ENCODE measurements at regions of chr14 and their contacts with region 1.

Region 1: GRCh38 chr14:36070031-36070719 is 106.3 kb downstream of the PTCSC3 start:
- DNase-seq: peak; percentile 57 to 82
- ATAC-seq: peak; percentile 95 to 96
- H3K4me3 ChIP-seq: no peak overlapping the region
- H3K27ac ChIP-seq: no peak overlapping the region
- H3K4me1 ChIP-seq: peaks cover 16% of the 10 kb centered on the region
- CTCF ChIP-seq: peak; percentile 91
- EP300 ChIP-seq: no peak
- POLR2A ChIP-seq: no peak
- RAD21 ChIP-seq: peak; percentile 94 to 96

Region 2: GRCh38 chr14:35826218-35826951 is 243.8 kb before region 1 on chr14 and contains the start of gene BRMS1L:
- CTCF ChIA-PET with region 1: no interaction called
- POLR2A ChIA-PET with region 1: no interaction called
- DNase-seq: peak; percentile 97 to 99
- ATAC-seq: peak; percentile 96 to 97
- H3K4me3 ChIP-seq: peak within 1 kb of the TSS; percentile 68
- H3K27ac ChIP-seq: peak within 1 kb of the TSS; percentile 90 to 95
- H3K4me1 ChIP-seq: peaks cover 4% of the 10 kb centered on the region; the same call in 1 of the 3 replicates
- CTCF ChIP-seq: no peak
- EP300 ChIP-seq: no peak
- POLR2A ChIP-seq: peak; percentile 95
- RAD21 ChIP-seq: no peak
- polyA plus RNA-seq, gene BRMS1L: 11.0 and 17.0 TPM in 2 replicates

Region 3: DNA sequence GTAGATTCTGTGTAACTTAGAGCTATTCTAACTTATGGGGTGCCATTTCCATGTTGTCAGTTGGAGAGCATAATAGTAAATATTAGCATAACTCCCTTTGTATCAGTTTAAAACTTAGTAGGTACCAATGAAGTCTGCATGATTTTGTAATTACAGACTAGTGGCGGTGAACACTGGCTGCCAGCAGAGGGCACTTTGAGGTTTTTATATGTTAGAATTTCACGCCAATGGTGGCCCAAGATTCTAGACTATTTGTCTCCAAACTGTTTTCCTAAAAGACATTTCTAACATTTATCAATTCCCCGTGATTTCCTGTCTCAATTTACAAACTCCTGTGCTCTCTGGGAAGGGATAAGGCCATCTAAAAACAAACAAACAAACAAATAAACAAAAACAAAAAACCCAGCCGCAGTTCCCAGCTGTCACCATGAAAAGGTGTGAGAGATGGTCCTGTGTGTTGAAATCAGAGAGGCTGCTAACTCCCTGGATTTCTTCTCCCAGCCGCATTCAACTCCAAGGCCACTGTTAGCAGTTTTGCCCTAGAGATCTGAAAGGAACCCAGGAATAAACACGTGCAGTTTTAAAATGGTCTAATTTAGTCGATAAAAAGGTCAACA is 186.4 kb before region 1 on chr14:
- CTCF ChIA-PET with region 1: interaction called, 68 read pairs
- POLR2A ChIA-PET with region 1: no interaction called
- DNase-seq: peak; percentile 10 to 43
- ATAC-seq: peak; percentile 61 to 77; a peak in 3 of 6 replicates
- H3K4me3 ChIP-seq: no peak overlapping the region
- H3K27ac ChIP-seq: no peak overlapping the region
- H3K4me1 ChIP-seq: peaks cover 8% of the 10 kb centered on the region
- CTCF ChIP-seq: peak; percentile 74
- EP300 ChIP-seq: no peak
- POLR2A ChIP-seq: no peak
- RAD21 ChIP-seq: peak; percentile 57 to 62

Region 4: GRCh38 chr14:36085861-36086260 is 15.7 kb after region 1 on chr14:
- CTCF ChIA-PET with region 1: interaction called, 20 read pairs
- POLR2A ChIA-PET with region 1: no interaction called
- DNase-seq: no peak
- ATAC-seq: no peak
- H3K4me3 ChIP-seq: no peak overlapping the region
- H3K27ac ChIP-seq: 0 out of 6 replicates have a peak overlapping the region, but pooled peaks of 1 of the 2 experiments have one; percentile 14
- H3K4me1 ChIP-seq: peaks cover 11% of the 10 kb centered on the region
- CTCF ChIP-seq: no peak
- EP300 ChIP-seq: no peak
- POLR2A ChIP-seq: no peak
- RAD21 ChIP-seq: no peak

Region 5: DNA sequence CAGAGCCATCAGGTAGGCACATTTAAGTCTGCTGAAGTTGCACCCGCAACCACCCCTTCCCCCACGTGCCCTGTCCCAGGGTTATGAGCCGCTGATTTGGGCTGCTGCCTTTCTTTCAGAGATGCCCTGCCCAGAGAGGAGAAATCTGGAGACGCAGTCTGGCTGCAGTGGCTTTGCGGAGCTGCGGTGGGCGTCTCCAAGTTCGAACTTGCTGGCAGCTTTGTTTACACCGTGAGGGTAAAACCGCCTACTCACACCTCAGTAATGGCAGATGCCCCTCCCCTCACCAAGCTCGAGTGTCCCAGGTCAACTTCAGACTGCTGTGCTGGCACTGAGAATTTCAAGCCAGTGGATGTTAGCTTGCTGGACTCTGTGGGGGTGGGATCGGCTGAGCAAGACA is 91.6 kb after region 1 on chr14:
- CTCF ChIA-PET with region 1: interaction called, 14 read pairs
- POLR2A ChIA-PET with region 1: no interaction called
- DNase-seq: no peak
- ATAC-seq: no peak
- H3K4me3 ChIP-seq: no peak overlapping the region
- H3K27ac ChIP-seq: no peak overlapping the region
- H3K4me1 ChIP-seq: no peaks in the 10 kb centered on the region
- CTCF ChIP-seq: no peak
- EP300 ChIP-seq: no peak
- POLR2A ChIP-seq: no peak
- RAD21 ChIP-seq: no peak

Region 6: DNA sequence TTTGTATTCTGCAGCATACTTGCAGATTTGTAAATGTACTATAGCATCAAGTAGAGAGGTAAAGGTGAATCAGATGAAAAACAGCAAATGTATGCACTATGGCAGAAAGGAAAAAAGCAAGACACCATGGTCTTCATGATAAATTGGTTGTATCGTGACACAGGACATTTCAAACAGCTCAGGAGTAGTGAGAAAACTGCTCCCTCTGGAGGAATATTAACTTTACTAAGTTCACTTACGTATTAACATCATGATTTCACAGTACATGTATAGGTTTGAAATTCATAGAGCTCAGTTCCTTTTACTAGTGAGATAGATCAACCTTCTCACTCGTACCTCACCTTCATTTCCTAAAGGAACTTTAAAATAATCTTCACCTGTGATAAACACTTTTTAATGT is 243.7 kb after region 1 on chr14:
- CTCF ChIA-PET with region 1: interaction called, 34 read pairs
- POLR2A ChIA-PET with region 1: no interaction called
- DNase-seq: peak in 1 of 2 experiments; percentile 14
- ATAC-seq: peak; percentile 57 to 59; a peak in 3 of 6 replicates
- H3K4me3 ChIP-seq: no peak overlapping the region
- H3K27ac ChIP-seq: no peak overlapping the region
- H3K4me1 ChIP-seq: peaks cover 18% of the 10 kb centered on the region
- CTCF ChIP-seq: 0 out of 3 replicates have a peak, but pooled peaks have one; percentile 14
- EP300 ChIP-seq: no peak
- POLR2A ChIP-seq: no peak
- RAD21 ChIP-seq: peak in 1 of 2 experiments; percentile 12; a peak in 1 of 5 replicates

Region 7: DNA sequence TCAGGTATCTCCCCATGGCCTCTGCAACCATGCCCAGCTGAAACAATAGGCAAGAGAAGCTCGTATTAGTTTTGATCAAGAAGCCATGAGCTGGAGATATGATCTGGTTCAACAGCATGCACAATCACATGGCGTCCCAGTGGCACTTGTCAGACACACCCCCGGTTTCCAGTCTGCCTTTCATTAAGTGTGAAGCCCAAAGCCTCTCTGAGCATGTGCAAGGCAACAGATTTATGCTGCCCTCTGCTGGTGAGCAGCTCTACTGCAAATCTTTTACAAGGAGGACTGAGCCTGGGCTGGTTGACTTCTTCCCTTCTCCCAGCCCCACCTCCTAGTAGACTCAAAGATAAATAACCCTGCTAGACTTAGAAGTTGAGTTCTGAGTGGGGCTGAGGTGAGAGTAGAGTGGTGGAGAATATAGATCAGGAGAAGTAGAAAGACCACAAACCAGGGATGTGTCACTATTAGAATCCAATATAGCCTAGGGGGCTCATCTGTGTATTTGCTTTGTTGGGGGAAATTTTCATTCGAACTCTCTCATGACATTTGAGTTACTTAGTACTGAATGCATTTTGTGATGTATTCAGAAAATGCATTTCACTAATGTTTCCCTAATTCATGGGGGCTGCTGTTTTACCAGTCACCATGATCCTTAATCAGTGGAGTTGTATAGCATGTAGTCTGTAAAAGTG is 304.0 kb after region 1 on chr14:
- CTCF ChIA-PET with region 1: interaction called, 105 read pairs
- POLR2A ChIA-PET with region 1: no interaction called
- DNase-seq: peak; percentile 38 to 81
- ATAC-seq: peak; percentile 92 to 99
- H3K4me3 ChIP-seq: no peak overlapping the region
- H3K27ac ChIP-seq: no peak overlapping the region
- H3K4me1 ChIP-seq: no peaks in the 10 kb centered on the region
- CTCF ChIP-seq: peak; percentile 73
- EP300 ChIP-seq: no peak
- POLR2A ChIP-seq: no peak
- RAD21 ChIP-seq: peak; percentile 72 to 75

Region 8: DNA sequence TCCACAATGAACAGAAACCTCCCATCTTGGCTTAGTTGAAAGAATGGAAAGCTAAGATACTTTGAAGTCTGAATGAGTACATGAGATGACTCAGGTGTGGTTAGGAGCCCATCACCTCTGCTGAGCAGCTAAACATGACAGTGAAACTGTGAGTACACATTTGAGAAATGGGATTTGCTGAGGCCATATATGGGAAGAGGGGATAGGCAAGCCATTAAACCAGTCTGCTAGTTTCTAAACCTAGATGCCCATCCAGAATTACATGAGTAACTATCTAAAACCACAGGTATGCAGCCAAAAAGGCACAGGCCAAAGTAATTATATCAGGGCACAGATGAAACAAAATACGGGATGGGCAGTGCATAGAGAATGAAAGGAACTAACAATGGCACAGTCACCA is 408.6 kb after region 1 on chr14:
- CTCF ChIA-PET with region 1: no interaction called
- POLR2A ChIA-PET with region 1: no interaction called
- DNase-seq: no peak
- ATAC-seq: no peak
- H3K4me3 ChIP-seq: no peak overlapping the region
- H3K27ac ChIP-seq: no peak overlapping the region
- H3K4me1 ChIP-seq: no peaks in the 10 kb centered on the region
- CTCF ChIP-seq: no peak
- EP300 ChIP-seq: no peak
- POLR2A ChIP-seq: no peak
- RAD21 ChIP-seq: no peak

Region 9: GRCh38 chr14:36520601-36521525 is 450.7 kb after region 1 on chr14:
- CTCF ChIA-PET with region 1: interaction called, 66 read pairs
- POLR2A ChIA-PET with region 1: no interaction called
- DNase-seq: peak; percentile 57 to 64
- ATAC-seq: peak; percentile 73 to 83
- H3K4me3 ChIP-seq: peak overlapping the region; percentile 54
- H3K27ac ChIP-seq: no peak overlapping the region
- H3K4me1 ChIP-seq: peaks cover 9% of the 10 kb centered on the region; the same call in 2 of the 3 replicates
- CTCF ChIP-seq: peak; percentile 29
- EP300 ChIP-seq: no peak
- POLR2A ChIP-seq: no peak
- RAD21 ChIP-seq: no peak

Measured in A549 (cell line).